ENCODE measurements at regions of chr5 and their contacts with region 1.

Region 1: DNA sequence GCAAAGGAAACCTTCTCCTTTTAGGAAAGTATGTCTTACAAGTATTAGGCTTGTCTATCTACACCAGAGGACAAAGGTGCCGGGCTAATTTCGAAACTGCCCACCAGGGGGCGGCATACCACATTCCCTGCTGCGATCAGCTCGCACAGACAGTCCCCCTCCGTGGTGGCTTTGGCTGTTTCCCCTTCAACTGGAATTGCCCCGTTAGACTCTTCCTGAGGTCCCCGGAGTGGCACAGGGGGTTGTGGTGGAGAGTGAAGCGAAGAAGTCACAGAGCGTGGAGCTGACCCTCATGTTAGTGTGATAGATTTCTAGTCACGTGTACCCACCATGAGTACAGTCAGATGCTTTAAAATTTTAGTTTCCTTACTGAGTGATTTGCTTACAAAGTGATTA is 17.5 kb downstream of the PTTG1 start:
- DNase-seq: peak; percentile 95
- ATAC-seq: peak; percentile 78
- H3K4me3 Mint-ChIP-seq: peak overlapping the region; percentile 78
- H3K27ac Mint-ChIP-seq: peak overlapping the region; percentile 99
- H3K4me1 Mint-ChIP-seq: peaks cover 61% of the 10 kb centered on the region
- H3K27me3 Mint-ChIP-seq: peaks cover 5% of the 10 kb centered on the region
- CTCF ChIP-seq: peak; percentile 84

Region 2: GRCh38 chr5:160327818-160328217 is 111.4 kb before region 1 on chr5:
- CTCF ChIA-PET with region 1: no interaction called
- POLR2A ChIA-PET with region 1: no interaction called
- intact Hi-C with region 1: no loop called
- DNase-seq: no peak
- ATAC-seq: no peak
- H3K4me3 Mint-ChIP-seq: no peak overlapping the region
- H3K27ac Mint-ChIP-seq: no peak overlapping the region
- H3K4me1 Mint-ChIP-seq: peaks cover 8% of the 10 kb centered on the region
- H3K27me3 Mint-ChIP-seq: no peaks in the 10 kb centered on the region
- CTCF ChIP-seq: no peak

Region 3: DNA sequence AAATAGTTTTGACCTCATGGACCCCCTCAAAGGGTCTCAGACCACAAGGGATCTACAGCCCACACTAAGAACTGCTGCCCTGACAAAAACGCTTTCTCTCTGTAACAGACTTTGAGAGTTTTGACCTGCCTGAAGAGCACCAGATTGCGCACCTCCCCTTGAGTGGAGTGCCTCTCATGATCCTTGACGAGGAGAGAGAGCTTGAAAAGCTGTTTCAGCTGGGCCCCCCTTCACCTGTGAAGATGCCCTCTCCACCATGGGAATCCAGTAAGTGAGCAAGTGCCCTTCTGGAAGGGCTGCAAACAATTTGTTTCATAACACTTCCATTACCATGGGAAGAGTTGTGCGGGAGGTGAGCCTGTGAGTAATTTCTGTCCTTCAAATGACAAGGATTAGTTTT is 11.6 kb before region 1 on chr5:
- CTCF ChIA-PET with region 1: interaction called, 107 read pairs
- POLR2A ChIA-PET with region 1: interaction called, 6 read pairs
- intact Hi-C with region 1: no loop called
- DNase-seq: no peak
- ATAC-seq: no peak
- H3K4me3 Mint-ChIP-seq: no peak overlapping the region
- H3K27ac Mint-ChIP-seq: no peak overlapping the region
- H3K4me1 Mint-ChIP-seq: peaks cover 24% of the 10 kb centered on the region
- H3K27me3 Mint-ChIP-seq: no peaks in the 10 kb centered on the region
- CTCF ChIP-seq: no peak

Region 4: DNA sequence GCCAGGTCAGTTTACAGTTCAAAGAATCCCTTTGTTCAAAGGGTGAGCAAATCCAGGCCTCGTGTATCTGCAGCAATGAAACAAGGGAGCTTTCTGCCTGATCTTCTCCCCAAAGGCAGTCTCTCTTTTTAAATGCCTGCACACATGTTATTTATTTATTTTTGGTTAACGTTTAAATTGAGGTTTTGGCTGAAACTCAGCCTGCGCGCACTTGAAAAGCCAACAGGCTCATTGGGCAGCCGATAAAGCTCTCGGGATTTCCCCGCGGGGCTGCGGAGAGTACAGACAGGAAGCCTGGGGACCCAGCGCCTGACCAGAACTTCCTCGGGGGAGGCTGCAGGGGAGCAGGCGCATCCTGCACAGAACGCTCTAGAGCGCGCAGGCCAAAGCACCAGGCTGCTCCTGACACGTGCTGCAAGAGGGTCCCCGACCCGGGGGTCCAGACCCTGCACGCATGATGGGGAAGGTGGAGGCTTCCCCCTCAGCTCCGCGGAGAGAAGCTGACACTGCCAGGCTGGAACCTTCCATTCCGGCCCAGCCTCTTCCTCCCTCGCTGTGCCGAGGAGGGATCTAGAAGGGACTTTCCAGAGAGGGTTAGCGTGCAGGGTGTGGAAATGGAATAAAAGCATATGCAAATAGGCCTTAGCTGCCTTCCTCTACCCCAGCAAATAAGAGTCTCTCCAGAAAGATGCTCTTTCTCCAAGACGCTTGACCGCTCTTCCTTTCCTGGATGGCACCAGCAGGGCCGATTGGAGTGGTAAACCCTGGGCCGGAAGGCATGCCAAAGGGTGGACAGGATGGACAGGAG is 28.6 kb after region 1 on chr5:
- CTCF ChIA-PET with region 1: interaction called, 195 read pairs
- POLR2A ChIA-PET with region 1: interaction called, 41 read pairs
- intact Hi-C with region 1: loop called (anchors 1 kb)
- DNase-seq: peak; percentile 96
- ATAC-seq: peak; percentile 86
- H3K4me3 Mint-ChIP-seq: peak overlapping the region; percentile 100
- H3K27ac Mint-ChIP-seq: peak overlapping the region; percentile 100
- H3K4me1 Mint-ChIP-seq: peaks cover 67% of the 10 kb centered on the region
- H3K27me3 Mint-ChIP-seq: no peaks in the 10 kb centered on the region
- CTCF ChIP-seq: no peak

Region 5: GRCh38 chr5:160500786-160501779 is 61.9 kb after region 1 on chr5:
- CTCF ChIA-PET with region 1: interaction called, 156 read pairs
- POLR2A ChIA-PET with region 1: interaction called, 12 read pairs
- intact Hi-C with region 1: loop called (anchors 2 kb)
- DNase-seq: no peak
- ATAC-seq: no peak
- H3K4me3 Mint-ChIP-seq: no peak overlapping the region
- H3K27ac Mint-ChIP-seq: no peak overlapping the region
- H3K4me1 Mint-ChIP-seq: peaks cover 16% of the 10 kb centered on the region
- H3K27me3 Mint-ChIP-seq: no peaks in the 10 kb centered on the region
- CTCF ChIP-seq: no peak

Region 6: DNA sequence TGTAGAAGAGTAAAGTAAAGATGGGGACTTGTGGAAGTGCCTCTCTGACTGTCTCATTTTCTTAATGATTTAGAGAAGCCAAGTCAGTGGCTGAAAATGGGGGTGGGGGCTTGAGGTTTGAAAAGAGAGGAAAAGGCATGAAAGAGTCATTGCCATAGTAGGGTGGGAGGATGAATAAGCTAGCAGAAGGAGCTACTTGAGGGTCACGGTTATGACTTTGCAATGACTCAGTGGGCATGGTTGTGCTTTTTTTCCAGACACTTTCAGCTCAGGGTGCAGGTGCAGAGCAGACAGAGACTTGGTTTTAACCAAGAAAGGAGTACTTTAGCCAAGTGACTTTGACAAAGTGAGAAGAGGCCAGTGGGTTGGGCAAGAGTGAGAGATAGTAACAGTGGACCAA is 100.2 kb after region 1 on chr5:
- CTCF ChIA-PET with region 1: interaction called, 19 read pairs
- POLR2A ChIA-PET with region 1: no interaction called
- intact Hi-C with region 1: no loop called
- DNase-seq: peak; percentile 84
- ATAC-seq: peak; percentile 97
- H3K4me3 Mint-ChIP-seq: no peak overlapping the region
- H3K27ac Mint-ChIP-seq: no peak overlapping the region
- H3K4me1 Mint-ChIP-seq: peaks cover 11% of the 10 kb centered on the region
- H3K27me3 Mint-ChIP-seq: peaks cover 10% of the 10 kb centered on the region
- CTCF ChIP-seq: no peak

Region 7: DNA sequence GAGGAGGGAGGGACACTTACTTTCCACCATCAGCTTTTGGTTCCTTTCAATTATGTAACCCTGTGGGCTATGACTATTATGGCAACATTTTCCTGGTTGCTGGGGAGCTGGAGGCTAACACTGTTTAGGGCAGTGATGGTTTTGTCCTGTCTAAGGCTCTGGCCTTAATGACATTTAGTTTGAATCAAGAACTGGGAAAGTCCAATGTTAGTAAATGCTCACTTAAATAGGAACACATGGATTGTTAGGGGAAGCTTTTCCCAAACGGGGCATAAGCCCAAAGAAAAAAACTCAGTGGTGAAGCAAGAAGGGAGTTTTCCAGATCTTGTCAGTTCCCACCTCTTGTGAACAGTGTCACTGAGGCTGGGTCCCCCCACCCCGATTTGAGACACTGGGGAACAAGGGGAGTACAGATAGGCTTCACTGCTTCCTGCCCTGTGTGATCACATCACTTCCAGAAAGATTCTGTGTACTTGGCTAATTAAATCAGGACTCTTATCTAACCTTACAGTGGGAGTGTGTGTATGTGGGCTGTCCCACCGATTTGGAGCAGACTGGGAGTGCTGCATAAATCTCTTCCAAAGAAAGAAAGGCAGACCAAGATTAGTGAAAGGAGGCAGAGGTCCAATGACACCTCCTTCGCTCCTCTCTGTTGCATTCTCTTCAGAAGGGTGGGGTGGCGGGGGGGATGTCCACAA is 188.9 kb after region 1 on chr5:
- CTCF ChIA-PET with region 1: no interaction called
- POLR2A ChIA-PET with region 1: no interaction called
- intact Hi-C with region 1: no loop called
- DNase-seq: no peak
- ATAC-seq: no peak
- H3K4me3 Mint-ChIP-seq: no peak overlapping the region
- H3K27ac Mint-ChIP-seq: no peak overlapping the region
- H3K4me1 Mint-ChIP-seq: no peaks in the 10 kb centered on the region
- H3K27me3 Mint-ChIP-seq: peaks cover 5% of the 10 kb centered on the region
- CTCF ChIP-seq: no peak

Measured in activated CD8-positive, alpha-beta T cell treated with anti-CD3 and anti-CD28 coated beads for 36 hours (primary cell).